GM12878 (cell line): ENCODE measurements at regions of chr2 and their contacts with region 1.

Region 1: DNA sequence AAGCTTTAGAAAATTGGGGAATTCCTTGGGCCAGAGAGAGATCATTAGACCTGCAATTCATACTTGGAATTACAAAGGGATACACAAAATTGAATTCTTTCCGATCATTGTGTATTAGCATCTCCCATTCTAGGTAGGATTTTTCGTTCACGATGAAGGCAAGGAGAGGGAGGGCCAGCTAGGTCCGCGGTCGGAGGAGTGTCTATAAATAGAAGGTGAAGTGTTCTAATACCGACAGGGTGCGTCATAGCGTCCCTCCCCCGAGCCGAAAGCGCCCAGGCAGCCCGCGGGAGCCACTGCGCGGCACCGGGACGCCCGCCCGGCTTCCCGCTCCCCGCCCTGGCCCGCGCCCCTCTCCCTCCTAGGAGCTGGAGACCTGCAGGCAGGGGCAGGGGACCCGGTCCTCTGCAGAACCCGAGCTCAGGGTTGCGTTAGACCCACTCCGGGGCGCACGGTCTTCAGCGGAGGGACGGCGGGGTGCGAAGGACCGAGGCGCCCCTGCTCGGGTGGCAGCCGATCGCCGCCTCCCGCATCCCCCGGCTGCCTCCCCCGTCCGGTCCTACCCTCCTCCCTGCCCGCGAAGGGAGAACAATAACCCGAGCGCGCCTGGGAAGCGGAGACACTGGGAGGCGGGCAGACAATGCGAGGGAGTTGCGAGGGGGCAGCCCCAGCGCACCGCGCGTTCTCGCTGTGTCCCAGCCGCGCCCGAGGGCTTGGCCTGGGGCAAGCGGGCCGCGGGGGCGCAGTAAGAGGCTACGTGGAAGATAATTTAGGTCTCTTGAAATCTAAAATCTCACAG is 114.2 kb upstream of the SERTAD2 start:
- DNase-seq: no peak
- ATAC-seq: peak; percentile 94
- H3K4me3 ChIP-seq: peak overlapping the region; percentile 84
- H3K27ac ChIP-seq: peak overlapping the region; percentile 87
- H3K4me1 ChIP-seq: peaks cover 12% of the 10 kb centered on the region
- H3K27me3 ChIP-seq: no peaks in the 10 kb centered on the region
- CTCF ChIP-seq: peak in 2 of 3 experiments; percentile 7 to 29; a peak in 2 of 6 replicates
- EP300 ChIP-seq: peak in 1 of 2 experiments; percentile 40; a peak in 2 of 4 replicates
- POLR2A ChIP-seq: peak; percentile 78
- RAD21 ChIP-seq: no peak

Region 2: DNA sequence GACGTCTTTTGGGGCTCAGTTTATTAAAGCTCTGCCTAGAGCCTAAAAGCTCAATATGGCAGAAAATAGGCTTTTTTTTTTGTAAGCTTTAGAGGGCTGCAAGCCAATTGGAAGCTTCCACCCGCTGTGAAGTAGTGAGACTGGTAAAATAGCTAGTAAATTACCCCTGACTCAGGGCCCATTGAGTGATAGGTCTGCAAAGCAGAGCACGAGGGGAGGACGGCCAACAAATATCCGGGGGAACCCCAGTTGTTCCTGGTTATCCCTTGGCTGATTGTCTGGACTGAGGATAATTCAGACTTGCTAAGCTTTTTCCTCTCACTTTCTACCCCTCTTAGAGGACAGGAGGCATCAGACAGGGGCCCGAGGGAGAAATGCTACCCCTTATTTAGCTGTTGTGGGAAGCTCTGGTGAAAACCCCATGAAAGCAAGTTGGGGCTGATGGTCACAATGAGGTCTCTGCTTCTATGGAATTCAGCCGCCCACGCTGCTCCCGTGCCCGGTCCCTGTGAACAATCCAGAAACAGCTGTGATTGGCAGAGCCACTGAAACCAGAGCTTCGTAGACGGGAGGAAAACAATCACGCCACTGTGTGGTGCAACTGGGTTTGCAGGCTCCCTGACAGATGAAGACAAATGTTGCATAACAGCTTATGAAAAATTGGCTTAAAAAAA is 455.8 kb before region 1 on chr2:
- CTCF ChIA-PET with region 1: no interaction called
- POLR2A ChIA-PET with region 1: no interaction called
- RAD21 ChIA-PET with region 1: no interaction called
- SMC1A ChIA-PET with region 1: no interaction called
- in situ Hi-C with region 1: no loop called
- intact Hi-C with region 1: no loop called
- DNase-seq: no peak
- ATAC-seq: peak; percentile 80
- H3K4me3 ChIP-seq: no peak overlapping the region
- H3K27ac ChIP-seq: no peak overlapping the region
- H3K4me1 ChIP-seq: no peaks in the 10 kb centered on the region
- H3K27me3 ChIP-seq: no peaks in the 10 kb centered on the region
- CTCF ChIP-seq: peak in 2 of 3 experiments; percentile 38 to 55; a peak in 3 of 6 replicates
- EP300 ChIP-seq: no peak
- POLR2A ChIP-seq: no peak
- RAD21 ChIP-seq: no peak

Region 3: DNA sequence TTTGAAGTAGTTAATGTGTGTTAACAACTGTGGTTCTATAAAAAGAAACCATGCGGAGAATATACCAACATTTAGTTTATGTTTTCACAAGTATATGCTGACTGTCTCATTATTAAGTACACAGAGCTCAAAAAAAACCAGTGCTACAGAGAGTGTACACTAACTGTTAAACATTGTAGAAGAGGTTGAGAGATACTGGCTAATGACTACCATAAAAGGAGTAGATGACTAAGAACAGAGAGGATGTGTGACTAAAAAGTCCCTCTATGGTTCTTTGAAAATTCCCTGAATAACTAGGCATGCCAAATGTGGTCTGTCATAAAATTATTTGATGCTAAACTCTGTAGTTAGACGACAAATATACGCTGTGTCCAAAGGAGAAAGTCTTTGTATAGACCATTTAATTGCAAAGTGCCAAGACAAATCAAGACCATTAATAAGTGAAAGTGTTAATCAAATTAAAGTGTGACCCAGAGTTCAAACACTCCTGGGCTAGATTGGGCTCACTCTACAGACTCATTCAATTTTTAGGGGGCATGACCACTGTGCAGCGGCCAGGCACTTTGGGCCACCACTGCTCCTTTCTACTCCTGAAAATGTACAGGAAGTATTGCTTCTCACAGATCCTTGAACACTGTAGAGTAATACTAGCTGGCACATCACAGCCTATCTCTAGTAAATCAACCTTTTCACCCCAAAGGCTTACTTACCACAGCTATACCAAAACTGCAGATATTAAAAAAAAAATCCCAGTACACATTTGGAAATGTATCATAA is 69.0 kb before region 1 on chr2:
- CTCF ChIA-PET with region 1: interaction called, 5 read pairs
- POLR2A ChIA-PET with region 1: interaction called, 5 read pairs
- RAD21 ChIA-PET with region 1: interaction called, 8 read pairs
- SMC1A ChIA-PET with region 1: interaction called, 4 read pairs
- in situ Hi-C with region 1: no loop called
- intact Hi-C with region 1: loop called (anchors 2 kb)
- DNase-seq: peak; percentile 83
- ATAC-seq: peak; percentile 90
- H3K4me3 ChIP-seq: no peak overlapping the region; the same call in 1 of the 2 replicates
- H3K27ac ChIP-seq: peak overlapping the region; percentile 98
- H3K4me1 ChIP-seq: peaks cover 53% of the 10 kb centered on the region
- H3K27me3 ChIP-seq: no peaks in the 10 kb centered on the region
- CTCF ChIP-seq: no peak
- EP300 ChIP-seq: peak; percentile 41 to 84; a peak in 2 of 4 replicates
- POLR2A ChIP-seq: no peak
- RAD21 ChIP-seq: no peak

Region 4: DNA sequence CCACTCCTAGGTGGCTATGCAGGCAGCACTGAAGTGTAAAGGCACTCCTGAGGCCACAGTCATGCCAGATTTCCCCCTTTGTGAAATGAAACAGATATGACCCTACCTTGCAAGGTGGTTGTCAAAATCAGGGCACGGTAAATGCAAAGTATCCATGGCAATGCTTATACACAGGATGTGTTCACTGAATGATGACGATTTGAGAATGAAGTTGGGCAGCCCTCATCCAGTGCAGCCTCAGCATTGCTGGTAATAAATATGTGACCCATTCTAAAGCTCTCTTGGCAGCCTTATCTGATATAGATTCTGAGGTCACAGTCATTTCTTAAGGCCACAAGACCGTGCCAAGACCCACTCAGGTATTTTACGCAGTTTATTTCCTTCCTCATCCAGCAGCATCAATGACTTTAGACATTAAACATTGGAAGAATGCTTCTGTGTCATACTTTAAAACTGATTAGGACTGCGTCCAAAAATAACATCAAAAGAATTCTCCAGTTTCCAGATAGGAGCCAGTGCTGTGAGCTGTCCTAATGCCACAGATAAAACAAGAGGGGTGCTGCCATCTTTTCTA is 11.3 kb after region 1 on chr2:
- CTCF ChIA-PET with region 1: interaction called, 3 read pairs
- POLR2A ChIA-PET with region 1: no interaction called
- RAD21 ChIA-PET with region 1: no interaction called
- SMC1A ChIA-PET with region 1: interaction called, 11 read pairs
- in situ Hi-C with region 1: no loop called
- intact Hi-C with region 1: no loop called
- DNase-seq: no peak
- ATAC-seq: peak; percentile 22; the same call in 2 of the 3 replicates
- H3K4me3 ChIP-seq: no peak overlapping the region
- H3K27ac ChIP-seq: no peak overlapping the region
- H3K4me1 ChIP-seq: peaks cover 2% of the 10 kb centered on the region; the same call in 1 of the 2 replicates
- H3K27me3 ChIP-seq: no peaks in the 10 kb centered on the region
- CTCF ChIP-seq: no peak
- EP300 ChIP-seq: no peak
- POLR2A ChIP-seq: no peak
- RAD21 ChIP-seq: no peak

Region 5: GRCh38 chr2:64831134-64831976 is 63.5 kb after region 1 on chr2:
- CTCF ChIA-PET with region 1: interaction called, 13 read pairs
- POLR2A ChIA-PET with region 1: interaction called, 4 read pairs
- RAD21 ChIA-PET with region 1: interaction called, 23 read pairs
- SMC1A ChIA-PET with region 1: interaction called, 10 read pairs
- in situ Hi-C with region 1: no loop called
- intact Hi-C with region 1: loop called (anchors 1 kb)
- DNase-seq: peak; percentile 71
- ATAC-seq: peak; percentile 96
- H3K4me3 ChIP-seq: peak overlapping the region; percentile 19; the same call in 1 of the 2 replicates
- H3K27ac ChIP-seq: peak overlapping the region; percentile 80
- H3K4me1 ChIP-seq: peaks cover 12% of the 10 kb centered on the region
- H3K27me3 ChIP-seq: no peaks in the 10 kb centered on the region
- CTCF ChIP-seq: peak; percentile 80 to 99 (median 98)
- EP300 ChIP-seq: 0 out of 4 replicates have a peak, but pooled peaks of 1 of the 2 experiments have one; percentile 10
- POLR2A ChIP-seq: no peak; the same call in none of the 2 replicates
- RAD21 ChIP-seq: peak; percentile 85